Activated CD4-positive, alpha-beta memory T cell treated with anti-CD3 and anti-CD28 coated beads for 36 hours (primary cell): ENCODE measurements at regions of chr15 and their contacts with region 1.

Region 1: GRCh38 chr15:68383161-68384074 is 48.5 kb downstream of the ITGA11 start:
- DNase-seq: peak; percentile 42
- H3K4me3 Mint-ChIP-seq: no peak overlapping the region
- H3K27ac Mint-ChIP-seq: no peak overlapping the region
- H3K4me1 Mint-ChIP-seq: peaks cover 9% of the 10 kb centered on the region
- H3K27me3 Mint-ChIP-seq: no peaks in the 10 kb centered on the region

Region 2: DNA sequence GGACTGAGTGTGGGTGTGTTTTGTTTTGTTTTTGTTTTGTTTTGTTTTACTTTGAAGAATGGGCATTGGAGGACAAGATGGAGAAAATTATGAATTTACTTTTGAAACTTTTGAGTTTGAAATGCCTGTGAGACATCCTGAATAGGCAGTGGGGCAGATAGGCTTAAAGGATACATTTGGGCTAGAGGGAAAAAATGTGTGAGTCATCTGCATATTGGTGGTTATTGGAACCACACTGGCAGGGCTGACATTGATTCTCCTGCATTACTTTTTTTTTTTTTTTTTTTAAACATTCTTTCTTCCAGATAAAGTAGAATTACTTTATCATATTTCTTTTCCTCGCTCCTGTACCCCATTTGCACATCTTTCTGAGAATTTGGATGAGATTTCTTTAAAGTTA is 234.4 kb before region 1 on chr15:
- CTCF ChIA-PET with region 1: no interaction called
- POLR2A ChIA-PET with region 1: no interaction called
- intact Hi-C with region 1: no loop called
- DNase-seq: no peak
- H3K4me3 Mint-ChIP-seq: no peak overlapping the region
- H3K27ac Mint-ChIP-seq: peak overlapping the region; percentile 3
- H3K4me1 Mint-ChIP-seq: peaks cover 10% of the 10 kb centered on the region
- H3K27me3 Mint-ChIP-seq: no peaks in the 10 kb centered on the region

Region 3: GRCh38 chr15:68252925-68253534 is 130.4 kb before region 1 on chr15:
- CTCF ChIA-PET with region 1: interaction called, 44 read pairs
- POLR2A ChIA-PET with region 1: no interaction called
- intact Hi-C with region 1: loop called (anchors 1 kb)
- DNase-seq: peak; percentile 36
- H3K4me3 Mint-ChIP-seq: no peak overlapping the region
- H3K27ac Mint-ChIP-seq: no peak overlapping the region
- H3K4me1 Mint-ChIP-seq: peaks cover 4% of the 10 kb centered on the region
- H3K27me3 Mint-ChIP-seq: peaks cover 3% of the 10 kb centered on the region

Region 4: DNA sequence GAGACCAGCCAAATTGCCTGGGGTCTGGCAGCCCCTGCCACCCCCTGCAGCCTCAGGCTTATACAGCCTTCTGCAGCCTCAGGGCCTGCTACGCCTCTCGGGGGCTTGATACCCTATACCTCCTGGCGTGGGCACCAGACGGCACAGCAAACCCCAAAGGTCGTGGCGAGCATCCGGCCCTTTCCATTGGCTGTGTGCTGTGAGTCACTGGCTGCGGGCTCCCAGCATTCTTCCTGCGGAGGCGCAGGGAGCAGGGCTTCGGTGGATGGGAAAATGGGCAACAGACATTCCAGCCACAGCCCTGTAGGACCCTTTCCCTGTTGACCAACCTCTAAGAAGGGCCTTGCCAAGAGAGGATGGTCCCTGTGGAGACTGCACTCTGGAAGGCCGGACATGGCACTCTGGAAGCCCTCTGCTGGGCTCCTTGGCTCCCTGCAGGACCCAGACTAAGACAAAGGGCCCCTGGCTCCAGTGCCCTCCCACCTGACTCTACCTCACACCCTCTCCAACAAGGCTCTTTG is 11.1 kb before region 1 on chr15:
- CTCF ChIA-PET with region 1: interaction called, 10 read pairs
- POLR2A ChIA-PET with region 1: no interaction called
- intact Hi-C with region 1: no loop called
- DNase-seq: no peak
- H3K4me3 Mint-ChIP-seq: no peak overlapping the region
- H3K27ac Mint-ChIP-seq: no peak overlapping the region
- H3K4me1 Mint-ChIP-seq: no peaks in the 10 kb centered on the region
- H3K27me3 Mint-ChIP-seq: peaks cover 6% of the 10 kb centered on the region